Endothelial cell of umbilical vein (primary cell): ENCODE measurements at regions of chr2 and their contacts with region 1.

Region 1: GRCh38 chr2:16756831-16757644 is 91.4 kb upstream of the CYRIA start:
- DNase-seq: peak; percentile 67
- H3K4me3 ChIP-seq: no peak overlapping the region
- H3K27ac ChIP-seq: no peak overlapping the region
- H3K4me1 ChIP-seq: no peaks in the 10 kb centered on the region
- H3K27me3 ChIP-seq: peaks cover 0 to 2% of the 10 kb centered on the region in 2 experiments
- CTCF ChIP-seq: peak; percentile 78 to 84
- POLR2A ChIP-seq: no peak

Region 2: DNA sequence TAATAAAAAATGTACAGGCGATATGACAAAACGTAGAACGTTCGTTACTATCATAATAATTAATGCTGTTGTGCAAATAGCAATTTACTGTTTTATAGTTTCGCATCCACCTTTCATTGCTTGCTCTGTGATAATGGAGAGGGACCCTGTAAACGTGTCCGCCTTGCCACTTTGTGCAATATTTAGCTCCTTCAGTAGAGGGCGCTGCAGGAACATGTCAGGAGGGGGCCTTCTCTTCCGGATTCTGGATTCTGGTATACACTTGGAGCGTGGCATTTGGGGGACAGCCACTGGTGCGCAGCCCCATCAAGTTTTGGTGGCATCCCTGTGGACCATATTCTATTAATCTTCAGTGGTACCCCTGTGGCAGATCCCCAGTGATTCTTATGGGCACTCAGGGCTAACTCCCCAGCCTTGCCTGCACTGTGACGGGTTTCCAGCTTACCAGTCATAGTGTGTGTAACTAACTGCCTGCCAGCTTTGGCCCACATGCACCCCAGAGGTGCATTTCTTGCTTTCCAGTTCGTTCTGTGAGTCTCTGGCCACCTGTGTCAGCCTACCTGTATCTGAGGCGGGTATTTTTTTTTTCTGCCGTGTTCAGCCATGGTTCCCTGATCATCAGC is 231.7 kb before region 1 on chr2:
- CTCF ChIA-PET with region 1: interaction called, 64 read pairs
- POLR2A ChIA-PET with region 1: no interaction called
- dilution Hi-C with region 1: no loop called
- intact Hi-C with region 1: loop called (anchors 1 kb)
- DNase-seq: peak; percentile 25
- H3K4me3 ChIP-seq: no peak overlapping the region
- H3K27ac ChIP-seq: no peak overlapping the region
- H3K4me1 ChIP-seq: no peaks in the 10 kb centered on the region
- H3K27me3 ChIP-seq: peaks cover 2 to 9% of the 10 kb centered on the region in 2 experiments
- CTCF ChIP-seq: peak; percentile 61 to 62
- POLR2A ChIP-seq: no peak

Region 3: GRCh38 chr2:16553226-16553625 is 203.8 kb before region 1 on chr2:
- CTCF ChIA-PET with region 1: interaction called, 42 read pairs
- POLR2A ChIA-PET with region 1: no interaction called
- dilution Hi-C with region 1: no loop called
- intact Hi-C with region 1: loop called (anchors 1 kb)
- DNase-seq: peak; percentile 51
- H3K4me3 ChIP-seq: no peak overlapping the region
- H3K27ac ChIP-seq: no peak overlapping the region
- H3K4me1 ChIP-seq: no peaks in the 10 kb centered on the region
- H3K27me3 ChIP-seq: no peaks in the 10 kb centered on the region
- CTCF ChIP-seq: peak; percentile 66 to 71
- POLR2A ChIP-seq: no peak

Region 4: DNA sequence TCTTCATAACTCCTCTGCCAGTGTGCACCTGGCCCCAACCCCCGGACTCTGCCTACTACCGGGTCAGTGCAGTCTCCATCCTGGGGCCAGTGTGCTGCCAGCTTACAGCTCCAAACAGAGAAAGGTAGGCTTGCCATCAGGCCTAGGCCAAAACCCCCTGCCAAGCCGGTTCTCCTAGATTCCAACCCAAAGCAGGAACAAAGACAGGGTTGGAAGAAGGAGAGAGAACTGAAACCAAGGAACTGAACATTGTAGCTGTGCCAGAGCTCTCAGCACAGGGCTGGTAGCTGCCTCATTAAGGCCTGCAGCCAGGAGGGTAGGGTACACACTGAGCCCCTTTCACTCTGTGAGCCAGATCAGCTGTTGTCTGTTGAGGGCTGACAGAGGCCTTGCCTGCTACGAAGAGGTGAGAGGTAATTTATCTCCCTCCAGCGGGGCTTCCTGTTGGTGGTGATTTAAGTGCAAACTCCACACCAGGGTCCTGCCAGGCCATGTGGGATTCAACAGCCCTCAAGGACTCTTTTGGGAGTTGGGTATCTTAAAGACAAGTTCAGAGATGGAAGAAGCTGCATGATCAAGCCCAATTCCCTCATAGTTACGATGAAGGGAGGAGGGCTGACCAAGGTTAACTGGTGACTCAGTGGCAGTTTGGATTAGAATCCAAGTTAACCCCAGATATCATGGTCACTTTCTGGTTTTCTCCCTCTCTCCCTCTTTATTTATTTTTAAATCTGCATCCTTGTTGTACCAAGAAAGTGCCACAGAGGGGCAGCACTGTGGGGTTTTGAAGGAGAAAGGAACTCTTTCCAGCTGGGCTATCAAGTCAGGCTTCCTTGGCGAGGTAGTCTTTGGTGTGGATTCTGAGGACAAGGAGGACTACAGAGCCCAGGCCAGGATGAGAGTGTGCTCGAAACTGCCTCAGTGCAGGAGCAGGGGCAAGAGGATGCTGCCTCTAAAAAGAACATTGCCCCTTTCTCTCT is 139.5 kb before region 1 on chr2:
- CTCF ChIA-PET with region 1: interaction called, 149 read pairs
- POLR2A ChIA-PET with region 1: no interaction called
- dilution Hi-C with region 1: no loop called
- intact Hi-C with region 1: loop called (anchors 1 kb)
- DNase-seq: peak; percentile 59
- H3K4me3 ChIP-seq: no peak overlapping the region
- H3K27ac ChIP-seq: no peak overlapping the region
- H3K4me1 ChIP-seq: peaks cover 9% of the 10 kb centered on the region
- H3K27me3 ChIP-seq: no peaks in the 10 kb centered on the region
- CTCF ChIP-seq: peak; percentile 43 to 45
- POLR2A ChIP-seq: no peak